Natural killer cell (primary cell): ENCODE measurements at regions of chr14 and their contacts with region 1.

Region 1: DNA sequence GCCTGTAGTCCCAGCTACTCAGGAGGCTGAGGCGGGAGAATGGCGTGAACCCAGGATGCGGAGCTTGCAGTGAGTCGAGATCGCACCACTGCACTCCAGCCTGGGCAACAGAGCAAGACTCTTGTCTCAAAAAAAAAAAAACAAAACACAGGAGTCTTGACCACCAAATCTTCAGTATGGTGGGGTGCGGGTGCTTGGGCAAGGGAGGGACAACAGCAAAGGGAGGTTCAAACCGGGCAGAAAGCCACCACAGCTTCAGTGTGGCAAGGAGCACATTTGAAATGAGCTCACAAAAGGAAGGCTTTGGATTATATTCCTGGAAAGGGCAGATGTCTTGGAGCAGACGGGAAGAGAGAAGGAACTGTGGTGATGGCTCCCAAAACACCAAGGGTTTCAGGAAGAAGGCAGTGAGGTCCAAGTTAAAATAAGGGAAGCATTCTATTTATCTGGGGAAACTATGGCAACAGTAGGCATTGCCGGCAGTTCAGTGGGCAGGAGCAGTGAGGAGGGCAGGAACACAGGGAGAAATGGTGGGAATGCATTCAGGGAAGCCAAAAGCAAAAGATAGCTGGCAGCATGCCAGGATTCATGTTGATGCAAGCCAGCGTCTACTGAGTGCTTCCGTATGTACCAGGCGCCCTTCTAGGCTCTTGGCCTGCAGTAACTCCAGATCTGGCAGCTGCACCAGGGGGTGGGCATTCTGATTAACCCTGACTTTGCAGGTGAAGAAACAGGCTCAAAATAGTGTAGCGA is 51.0 kb upstream of the SRSF5 start:
- DNase-seq: peak in 1 of 2 donors; percentile 57
- ATAC-seq: peak; percentile 45 to 63 (median 54)
- H3K4me3 ChIP-seq: no peak overlapping the region
- H3K4me3 Mint-ChIP-seq: peak overlapping the region; percentile 80
- H3K27ac ChIP-seq: peak overlapping the region; percentile 93
- H3K27ac Mint-ChIP-seq: peak overlapping the region; percentile 99 to 100
- H3K4me1 ChIP-seq: peaks cover 72% of the 10 kb centered on the region
- H3K4me1 Mint-ChIP-seq: peaks cover 56 to 78% of the 10 kb centered on the region in 2 donors
- H3K27me3 ChIP-seq: no peaks in the 10 kb centered on the region
- H3K27me3 Mint-ChIP-seq: no peaks in the 10 kb centered on the region
- CTCF ChIP-seq: no peak

Region 2: GRCh38 chr14:69682621-69683263 is 33.2 kb before region 1 on chr14:
- intact Hi-C with region 1: loop called (anchors 5 kb)
- DNase-seq: peak in 1 of 2 donors; percentile 49
- ATAC-seq: peak; percentile 81 to 83 (median 83)
- H3K4me3 ChIP-seq: no peak overlapping the region
- H3K4me3 Mint-ChIP-seq: peak overlapping the region; percentile 47
- H3K27ac ChIP-seq: peak overlapping the region; percentile 24
- H3K27ac Mint-ChIP-seq: peak overlapping the region; percentile 33 to 53
- H3K4me1 ChIP-seq: peaks cover 38% of the 10 kb centered on the region
- H3K4me1 Mint-ChIP-seq: peaks cover 68 to 71% of the 10 kb centered on the region in 2 donors
- H3K27me3 ChIP-seq: no peaks in the 10 kb centered on the region
- H3K27me3 Mint-ChIP-seq: no peaks in the 10 kb centered on the region
- CTCF ChIP-seq: no peak

Region 3: GRCh38 chr14:69766984-69767368 is 51.1 kb after region 1 on chr14 and contains the start of gene SRSF5:
- intact Hi-C with region 1: loop called (anchors 1 kb)
- DNase-seq: peak; percentile 95 to 98
- ATAC-seq: peak; percentile 74 to 90 (median 80)
- H3K4me3 ChIP-seq: peak within 1 kb of the TSS; percentile 73
- H3K4me3 Mint-ChIP-seq: peak within 1 kb of the TSS; percentile 100
- H3K27ac ChIP-seq: peak within 1 kb of the TSS; percentile 89
- H3K27ac Mint-ChIP-seq: peak within 1 kb of the TSS; percentile 97 to 99
- H3K4me1 ChIP-seq: peaks cover 35% of the 10 kb centered on the region
- H3K4me1 Mint-ChIP-seq: peaks cover 61 to 65% of the 10 kb centered on the region in 2 donors
- H3K27me3 ChIP-seq: no peaks in the 10 kb centered on the region
- H3K27me3 Mint-ChIP-seq: no peaks in the 10 kb centered on the region
- CTCF ChIP-seq: no peak
- total RNA-seq, gene SRSF5: 1,327 to 1,669 (median 1,634) TPM